ENCODE measurements at regions of chr5 and their contacts with region 1.

Region 1: GRCh38 chr5:168219515-168220410 is 71.7 kb upstream of the WWC1 start:
- DNase-seq: peak; percentile 60
- H3K4me3 ChIP-seq: no peak overlapping the region
- H3K27ac ChIP-seq: no peak overlapping the region
- H3K4me1 ChIP-seq: no peaks in the 10 kb centered on the region
- H3K27me3 ChIP-seq: no peaks in the 10 kb centered on the region
- CTCF ChIP-seq: peak; percentile 85 to 93

Region 2: GRCh38 chr5:167587772-167588437 is 631.9 kb before region 1 on chr5:
- CTCF ChIA-PET with region 1: no interaction called
- dilution Hi-C with region 1: no loop called
- in situ Hi-C with region 1: loop called (anchors 10 kb)
- intact Hi-C with region 1: no loop called
- DNase-seq: peak; percentile 30
- H3K4me3 ChIP-seq: no peak overlapping the region
- H3K27ac ChIP-seq: no peak overlapping the region
- H3K4me1 ChIP-seq: no peaks in the 10 kb centered on the region
- H3K27me3 ChIP-seq: no peaks in the 10 kb centered on the region
- CTCF ChIP-seq: peak; percentile 48 to 67

Region 3: DNA sequence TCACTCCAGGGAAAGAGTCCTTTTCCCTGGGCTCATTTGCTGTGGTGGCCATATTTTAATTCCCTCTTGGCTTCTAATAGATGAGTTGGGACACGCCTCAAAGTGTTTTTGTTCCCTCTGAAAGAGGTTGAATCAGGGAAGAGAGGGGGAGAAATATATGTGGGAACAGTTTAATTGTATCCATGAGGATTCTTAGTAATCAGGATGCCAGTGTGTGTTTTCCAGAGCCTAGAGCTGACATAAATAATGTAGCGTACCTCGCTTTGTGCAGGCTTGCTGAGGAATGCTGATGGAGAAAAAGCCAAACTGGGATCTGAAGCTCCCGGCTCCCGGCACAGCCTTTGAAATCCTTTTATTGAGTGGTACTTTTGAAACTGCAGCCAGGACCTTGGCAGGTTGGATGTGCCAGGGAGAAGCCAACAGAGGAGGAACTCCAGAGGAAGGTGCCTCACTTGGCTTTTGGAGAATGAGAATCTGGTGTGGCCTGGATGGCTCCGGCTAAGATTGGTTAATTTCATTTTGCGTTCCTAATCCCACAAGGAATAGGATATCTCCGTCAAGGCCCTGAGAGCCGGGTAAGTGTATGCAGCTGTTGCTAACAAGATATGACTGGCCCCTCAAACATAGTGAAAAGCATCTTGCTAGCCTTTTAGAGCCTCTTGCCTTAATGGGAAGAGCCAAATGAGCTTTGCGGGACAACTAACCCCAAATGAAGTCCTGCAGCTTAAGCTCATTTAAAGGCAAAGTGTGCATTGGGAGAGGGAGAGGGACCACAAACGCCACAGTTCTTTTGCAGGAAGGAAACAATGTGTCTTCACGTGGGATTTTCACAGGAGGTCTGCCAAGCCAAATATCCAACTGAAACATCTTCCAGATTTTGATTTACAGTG is 399.4 kb before region 1 on chr5:
- CTCF ChIA-PET with region 1: no interaction called
- dilution Hi-C with region 1: no loop called
- in situ Hi-C with region 1: no loop called
- intact Hi-C with region 1: loop called (anchors 2 kb)
- DNase-seq: peak; percentile 7
- H3K4me3 ChIP-seq: peak overlapping the region; percentile 30 to 66 (median 61)
- H3K27ac ChIP-seq: peak overlapping the region; percentile 87
- H3K4me1 ChIP-seq: peaks cover 43% of the 10 kb centered on the region
- H3K27me3 ChIP-seq: no peaks in the 10 kb centered on the region
- CTCF ChIP-seq: no peak

Region 4: GRCh38 chr5:168047043-168047668 is 172.6 kb before region 1 on chr5:
- CTCF ChIA-PET with region 1: no interaction called
- dilution Hi-C with region 1: no loop called
- in situ Hi-C with region 1: no loop called
- intact Hi-C with region 1: loop called (anchors 10 kb)
- DNase-seq: peak; percentile 50
- H3K4me3 ChIP-seq: no peak overlapping the region
- H3K27ac ChIP-seq: no peak overlapping the region
- H3K4me1 ChIP-seq: no peaks in the 10 kb centered on the region
- H3K27me3 ChIP-seq: no peaks in the 10 kb centered on the region
- CTCF ChIP-seq: peak; percentile 59 to 66

Region 5: GRCh38 chr5:168251259-168251658 is 31.5 kb after region 1 on chr5:
- CTCF ChIA-PET with region 1: no interaction called
- dilution Hi-C with region 1: no loop called
- in situ Hi-C with region 1: no loop called
- intact Hi-C with region 1: no loop called
- DNase-seq: no peak
- H3K4me3 ChIP-seq: no peak overlapping the region
- H3K27ac ChIP-seq: no peak overlapping the region
- H3K4me1 ChIP-seq: no peaks in the 10 kb centered on the region
- H3K27me3 ChIP-seq: no peaks in the 10 kb centered on the region
- CTCF ChIP-seq: no peak

Region 6: GRCh38 chr5:168359832-168360460 is 140.2 kb after region 1 on chr5:
- CTCF ChIA-PET with region 1: no interaction called
- dilution Hi-C with region 1: no loop called
- in situ Hi-C with region 1: no loop called
- intact Hi-C with region 1: no loop called
- DNase-seq: peak; percentile 61
- H3K4me3 ChIP-seq: no peak overlapping the region
- H3K27ac ChIP-seq: no peak overlapping the region
- H3K4me1 ChIP-seq: peaks cover 33% of the 10 kb centered on the region
- H3K27me3 ChIP-seq: no peaks in the 10 kb centered on the region
- CTCF ChIP-seq: no peak

Measured in mammary epithelial cell (primary cell).